ENCODE measurements at regions of chr3 and their contacts with region 1.

Region 1: GRCh38 chr3:170429050-170429449 is 10.4 kb downstream of the CLDN11 start:
- DNase-seq: no peak
- ATAC-seq: no peak
- H3K4me3 ChIP-seq: no peak overlapping the region
- H3K27ac ChIP-seq: no peak overlapping the region
- H3K4me1 ChIP-seq: peaks cover 16% of the 10 kb centered on the region
- H3K27me3 ChIP-seq: no peaks in the 10 kb centered on the region; a peak in 3 of 4 replicates
- CTCF ChIP-seq: no peak
- EP300 ChIP-seq: no peak
- POLR2A ChIP-seq: no peak
- RAD21 ChIP-seq: no peak

Region 2: DNA sequence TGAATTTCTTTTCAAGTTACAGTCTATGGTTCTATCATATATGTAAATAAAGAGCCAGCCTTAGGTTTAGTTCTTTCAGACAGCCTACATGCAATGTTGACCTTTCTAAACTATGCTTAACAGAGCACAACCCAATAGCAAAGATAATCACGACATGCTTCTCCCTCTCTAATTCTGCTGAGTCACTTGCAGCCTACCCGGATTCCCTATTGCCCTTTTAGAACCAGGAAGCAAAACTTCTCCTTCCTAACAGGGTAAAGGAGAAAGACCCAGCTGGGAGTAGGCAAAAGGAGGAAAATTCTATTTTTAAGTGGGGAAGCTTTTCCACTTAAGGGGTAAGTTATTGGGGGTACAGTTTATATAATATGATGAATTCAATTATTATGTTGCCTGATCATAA is 77.5 kb after region 1 on chr3:
- CTCF ChIA-PET with region 1: no interaction called
- POLR2A ChIA-PET with region 1: no interaction called
- RAD21 ChIA-PET with region 1: no interaction called
- SMC1A ChIA-PET with region 1: no interaction called
- in situ Hi-C with region 1: no loop called
- intact Hi-C with region 1: no loop called
- DNase-seq: no peak
- ATAC-seq: no peak
- H3K4me3 ChIP-seq: no peak overlapping the region
- H3K27ac ChIP-seq: no peak overlapping the region
- H3K4me1 ChIP-seq: no peaks in the 10 kb centered on the region
- H3K27me3 ChIP-seq: no peaks in the 10 kb centered on the region; a peak in 1 of 4 replicates
- CTCF ChIP-seq: no peak
- EP300 ChIP-seq: no peak
- POLR2A ChIP-seq: no peak
- RAD21 ChIP-seq: no peak

Region 3: GRCh38 chr3:170632780-170633179 is 203.7 kb after region 1 on chr3:
- CTCF ChIA-PET with region 1: no interaction called
- POLR2A ChIA-PET with region 1: no interaction called
- RAD21 ChIA-PET with region 1: no interaction called
- SMC1A ChIA-PET with region 1: no interaction called
- in situ Hi-C with region 1: no loop called
- intact Hi-C with region 1: loop called (anchors 5 kb)
- DNase-seq: peak; percentile 95
- ATAC-seq: peak; percentile 97
- H3K4me3 ChIP-seq: no peak overlapping the region
- H3K27ac ChIP-seq: no peak overlapping the region
- H3K4me1 ChIP-seq: peaks cover 27% of the 10 kb centered on the region
- H3K27me3 ChIP-seq: peaks cover 0 to 5% of the 10 kb centered on the region in 2 experiments; a peak in 3 of 4 replicates
- CTCF ChIP-seq: no peak
- EP300 ChIP-seq: peak; percentile 37 to 44; a peak in 2 of 4 replicates
- POLR2A ChIP-seq: no peak
- RAD21 ChIP-seq: no peak

Measured in GM12878 (cell line).